ENCODE measurements at regions of chr9 and their contacts with region 1.

Region 1: GRCh38 chr9:101566904-101567724 is 27.7 kb downstream of the PPP3R2 start:
- DNase-seq: peak in 1 of 2 experiments; percentile 44
- H3K4me3 ChIP-seq: no peak overlapping the region
- H3K4me3 Mint-ChIP-seq: no peak overlapping the region
- H3K27ac Mint-ChIP-seq: no peak overlapping the region
- H3K4me1 ChIP-seq: 0 out of 2 replicates have a peak, but pooled peaks cover 5% of the 10 kb centered on the region
- H3K4me1 Mint-ChIP-seq: no peaks in the 10 kb centered on the region
- H3K27me3 ChIP-seq: no peaks in the 10 kb centered on the region
- H3K27me3 Mint-ChIP-seq: no peaks in the 10 kb centered on the region
- CTCF ChIP-seq: peak; percentile 50 to 60

Region 2: GRCh38 chr9:101458955-101459631 is 108.0 kb before region 1 on chr9:
- CTCF ChIA-PET with region 1: interaction called, 14 read pairs
- POLR2A ChIA-PET with region 1: no interaction called
- intact Hi-C with region 1: loop called (anchors 1 kb)
- DNase-seq: peak; percentile 37 to 56
- H3K4me3 ChIP-seq: no peak overlapping the region
- H3K4me3 Mint-ChIP-seq: no peak overlapping the region
- H3K27ac Mint-ChIP-seq: no peak overlapping the region
- H3K4me1 ChIP-seq: peaks cover 2% of the 10 kb centered on the region; the same call in 1 of the 2 replicates
- H3K4me1 Mint-ChIP-seq: peaks cover 6% of the 10 kb centered on the region
- H3K27me3 ChIP-seq: no peaks in the 10 kb centered on the region
- H3K27me3 Mint-ChIP-seq: no peaks in the 10 kb centered on the region
- CTCF ChIP-seq: peak; percentile 52 to 69

Measured in Caco-2 (cell line).